ENCODE measurements at regions of chr15 and their contacts with region 1.

Region 1: DNA sequence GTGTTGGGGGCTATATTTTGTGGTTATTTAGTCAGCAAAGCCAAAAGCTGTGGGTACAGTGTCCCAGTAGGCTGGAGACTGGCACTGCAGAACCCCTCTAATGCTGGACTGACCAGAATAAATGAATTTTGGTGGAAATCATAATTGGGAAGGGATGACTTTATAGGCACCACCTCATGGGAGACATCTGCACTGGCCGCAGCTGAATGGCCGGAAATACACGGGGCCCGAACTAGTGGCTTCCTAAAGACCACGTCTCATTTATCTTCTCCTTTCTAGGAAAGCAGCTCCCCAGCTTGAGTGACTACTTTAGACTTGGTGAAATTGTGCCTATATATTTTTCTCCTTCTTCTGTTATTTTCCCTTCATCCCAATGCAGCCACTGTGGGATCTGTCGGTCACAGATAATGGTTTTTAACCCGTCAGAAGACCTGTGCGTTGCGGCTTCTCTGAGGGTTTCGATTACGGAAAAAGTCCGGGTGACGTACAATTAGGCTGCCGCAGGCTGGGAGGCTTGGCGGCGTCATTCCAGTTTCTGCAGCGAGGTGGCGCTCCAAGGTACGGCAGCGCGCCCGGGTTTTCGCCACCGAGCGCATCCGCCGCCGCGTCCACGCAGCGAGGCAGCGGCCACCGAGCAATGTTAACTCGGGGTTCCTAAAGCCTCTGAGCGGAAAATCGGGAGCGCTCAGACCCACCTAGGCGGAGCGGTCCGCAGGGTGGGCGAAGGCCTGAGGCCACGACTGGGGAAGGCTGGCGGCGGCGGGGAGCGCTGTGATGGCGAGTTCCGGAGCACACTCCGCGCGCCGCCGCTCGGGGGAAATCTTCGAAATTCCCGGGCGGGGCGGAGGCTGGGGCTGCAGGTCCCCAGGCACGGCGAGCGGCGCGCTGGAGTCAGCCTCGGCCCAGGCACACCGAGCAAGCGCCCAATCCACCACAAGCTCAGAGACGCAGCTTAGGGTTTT is 26.3 kb downstream of the NR2F2 start:
- DNase-seq: peak; percentile 74
- H3K4me3 Mint-ChIP-seq: peak overlapping the region; percentile 79
- H3K27ac Mint-ChIP-seq: no peak overlapping the region
- H3K4me1 Mint-ChIP-seq: peaks cover 16% of the 10 kb centered on the region
- H3K27me3 Mint-ChIP-seq: peaks cover 67% of the 10 kb centered on the region

Region 2: GRCh38 chr15:96296264-96296663 is 60.5 kb before region 1 on chr15:
- intact Hi-C with region 1: no loop called
- DNase-seq: no peak
- H3K4me3 Mint-ChIP-seq: no peak overlapping the region
- H3K27ac Mint-ChIP-seq: no peak overlapping the region
- H3K4me1 Mint-ChIP-seq: no peaks in the 10 kb centered on the region
- H3K27me3 Mint-ChIP-seq: no peaks in the 10 kb centered on the region

Region 3: DNA sequence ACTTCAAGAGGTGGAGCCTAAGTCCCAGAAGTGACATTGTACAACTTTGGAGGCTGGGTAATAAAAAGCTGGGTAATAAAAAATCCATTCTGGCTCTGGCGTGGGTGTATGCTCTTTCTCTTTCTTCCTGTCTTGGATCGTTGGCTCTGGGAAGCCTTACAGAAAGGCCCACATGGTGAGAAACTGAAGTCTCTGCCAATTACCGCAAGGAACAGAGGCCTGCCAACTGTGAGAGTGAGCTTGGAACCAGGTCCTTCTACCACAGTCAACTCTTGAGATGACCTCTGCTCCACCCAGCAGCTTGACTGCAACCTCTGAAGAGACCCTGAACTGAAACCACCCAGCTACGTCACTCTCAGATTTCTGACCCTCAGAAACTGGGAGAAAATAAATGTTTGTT is 24.7 kb after region 1 on chr15:
- intact Hi-C with region 1: no loop called
- DNase-seq: no peak
- H3K4me3 Mint-ChIP-seq: no peak overlapping the region
- H3K27ac Mint-ChIP-seq: no peak overlapping the region
- H3K4me1 Mint-ChIP-seq: no peaks in the 10 kb centered on the region
- H3K27me3 Mint-ChIP-seq: no peaks in the 10 kb centered on the region

Region 4: GRCh38 chr15:96416934-96417759 is 60.4 kb after region 1 on chr15:
- intact Hi-C with region 1: loop called (anchors 2 kb)
- DNase-seq: no peak
- H3K4me3 Mint-ChIP-seq: no peak overlapping the region
- H3K27ac Mint-ChIP-seq: no peak overlapping the region
- H3K4me1 Mint-ChIP-seq: no peaks in the 10 kb centered on the region
- H3K27me3 Mint-ChIP-seq: peaks cover 79% of the 10 kb centered on the region

Region 5: GRCh38 chr15:97234851-97235610 is 878.3 kb after region 1 on chr15:
- intact Hi-C with region 1: loop called (anchors 5 kb)
- DNase-seq: no peak
- H3K4me3 Mint-ChIP-seq: no peak overlapping the region
- H3K27ac Mint-ChIP-seq: no peak overlapping the region
- H3K4me1 Mint-ChIP-seq: no peaks in the 10 kb centered on the region
- H3K27me3 Mint-ChIP-seq: no peaks in the 10 kb centered on the region